ENCODE measurements at regions of chr12 and their contacts with region 1.

Region 1: DNA sequence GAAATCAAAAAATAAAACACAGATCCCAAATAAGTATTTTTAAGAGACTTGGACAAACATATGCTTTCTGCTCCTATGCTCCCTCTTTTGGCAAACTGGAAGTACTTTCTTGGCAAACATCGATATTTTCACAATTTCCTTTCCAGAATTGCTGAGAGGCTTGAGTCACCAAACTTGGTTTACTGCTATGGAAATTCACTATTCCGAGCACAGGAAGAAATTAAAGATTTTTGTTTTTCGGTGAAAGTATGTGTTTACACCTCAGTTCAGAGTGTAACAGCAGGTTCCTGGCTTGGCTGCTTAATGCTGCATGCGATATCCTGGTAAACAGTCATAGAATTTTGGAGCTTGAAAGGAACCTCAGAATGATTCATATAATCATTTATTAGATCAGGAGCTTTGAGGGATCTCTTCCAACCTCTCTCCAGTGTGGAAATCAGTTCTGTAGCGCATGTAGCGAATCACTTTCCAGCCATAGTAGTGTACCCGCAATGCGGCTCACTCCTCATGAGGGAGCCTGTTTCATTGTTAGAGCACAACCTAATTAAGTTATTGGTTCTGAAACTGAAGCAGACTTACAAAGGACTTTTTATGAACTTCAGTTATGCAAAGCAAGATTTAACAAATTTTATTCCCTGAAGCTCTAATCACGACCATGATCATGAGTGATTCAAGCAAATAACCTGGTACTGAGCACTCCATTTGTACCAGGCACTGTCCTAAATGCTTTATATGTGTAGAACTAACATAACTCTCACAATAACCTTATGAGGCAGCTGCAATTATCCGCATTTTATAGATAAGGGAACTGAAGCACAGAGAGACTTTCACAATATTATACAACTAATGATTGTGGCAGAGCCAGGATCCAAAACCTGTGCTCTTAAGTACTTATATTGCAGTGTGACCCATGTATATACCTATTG is 56.4 kb upstream of the ATP2A2 start:
- DNase-seq: no peak
- ATAC-seq: no peak
- H3K4me3 ChIP-seq: no peak overlapping the region
- H3K27ac ChIP-seq: no peak overlapping the region
- H3K4me1 ChIP-seq: no peaks in the 10 kb centered on the region
- H3K27me3 ChIP-seq: no peaks in the 10 kb centered on the region
- CTCF ChIP-seq: peak; percentile 62

Region 2: GRCh38 chr12:110100315-110100970 is 124.2 kb before region 1 on chr12:
- CTCF ChIA-PET with region 1: no interaction called
- POLR2A ChIA-PET with region 1: interaction called, 14 read pairs
- in situ Hi-C with region 1: no loop called
- intact Hi-C with region 1: loop called (anchors 5 kb)
- DNase-seq: peak; percentile 53
- ATAC-seq: peak; percentile 84
- H3K4me3 ChIP-seq: no peak overlapping the region
- H3K27ac ChIP-seq: no peak overlapping the region
- H3K4me1 ChIP-seq: peaks cover 6% of the 10 kb centered on the region
- H3K27me3 ChIP-seq: no peaks in the 10 kb centered on the region
- CTCF ChIP-seq: peak; percentile 92

Region 3: GRCh38 chr12:110205931-110206330 is 18.7 kb before region 1 on chr12:
- CTCF ChIA-PET with region 1: no interaction called
- POLR2A ChIA-PET with region 1: interaction called, 11 read pairs
- in situ Hi-C with region 1: no loop called
- intact Hi-C with region 1: no loop called
- DNase-seq: no peak
- ATAC-seq: no peak
- H3K4me3 ChIP-seq: no peak overlapping the region
- H3K27ac ChIP-seq: no peak overlapping the region
- H3K4me1 ChIP-seq: no peaks in the 10 kb centered on the region
- H3K27me3 ChIP-seq: no peaks in the 10 kb centered on the region
- CTCF ChIP-seq: no peak

Region 4: GRCh38 chr12:110252706-110253105 is 28.1 kb after region 1 on chr12:
- CTCF ChIA-PET with region 1: no interaction called
- POLR2A ChIA-PET with region 1: interaction called, 18 read pairs
- in situ Hi-C with region 1: no loop called
- intact Hi-C with region 1: no loop called
- DNase-seq: no peak
- ATAC-seq: no peak
- H3K4me3 ChIP-seq: no peak overlapping the region
- H3K27ac ChIP-seq: no peak overlapping the region
- H3K4me1 ChIP-seq: 0 out of 2 replicates have a peak, but pooled peaks cover 2% of the 10 kb centered on the region
- H3K27me3 ChIP-seq: no peaks in the 10 kb centered on the region
- CTCF ChIP-seq: no peak

Region 5: GRCh38 chr12:110750784-110751461 is 526.3 kb after region 1 on chr12:
- CTCF ChIA-PET with region 1: no interaction called
- POLR2A ChIA-PET with region 1: interaction called, 12 read pairs
- in situ Hi-C with region 1: no loop called
- intact Hi-C with region 1: no loop called
- DNase-seq: no peak
- ATAC-seq: no peak
- H3K4me3 ChIP-seq: no peak overlapping the region
- H3K27ac ChIP-seq: no peak overlapping the region
- H3K4me1 ChIP-seq: no peaks in the 10 kb centered on the region
- H3K27me3 ChIP-seq: no peaks in the 10 kb centered on the region
- CTCF ChIP-seq: no peak

Region 6: DNA sequence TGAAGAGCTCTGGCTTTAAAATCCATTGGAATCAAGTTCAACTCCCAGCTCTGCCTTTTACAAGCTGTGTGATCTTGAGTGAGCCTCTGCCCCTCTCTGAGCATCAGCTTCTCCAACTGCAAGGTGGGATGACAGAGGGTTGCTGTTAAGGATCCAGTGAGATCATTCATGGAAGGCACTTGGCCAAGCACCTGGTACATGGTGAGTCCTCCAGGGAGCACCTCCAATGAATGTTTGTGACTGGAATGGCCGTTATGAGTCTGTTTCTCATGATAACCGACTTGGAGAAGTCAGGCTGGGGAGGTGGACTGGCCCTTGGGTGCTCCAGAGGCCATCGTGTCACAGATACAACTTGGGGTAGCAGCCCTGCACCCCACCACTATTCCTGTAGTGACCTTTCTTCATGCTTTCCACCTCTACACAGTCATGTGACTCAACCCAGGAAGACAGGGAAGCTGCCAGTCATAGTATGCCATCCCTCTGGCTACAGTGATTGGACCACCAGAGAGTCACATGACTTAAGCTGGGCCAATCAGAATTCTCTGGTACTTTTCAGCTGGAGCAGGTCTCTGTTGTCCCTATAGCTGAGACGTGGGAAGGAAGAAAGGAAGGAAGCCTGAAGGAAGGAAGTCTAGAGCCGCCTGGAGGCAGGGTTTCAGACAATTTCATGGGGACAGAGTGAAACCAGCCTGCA is 842.2 kb after region 1 on chr12:
- CTCF ChIA-PET with region 1: no interaction called
- POLR2A ChIA-PET with region 1: no interaction called
- in situ Hi-C with region 1: no loop called
- intact Hi-C with region 1: no loop called
- DNase-seq: no peak
- ATAC-seq: peak; percentile 35; the same call in 1 of the 2 replicates
- H3K4me3 ChIP-seq: no peak overlapping the region
- H3K27ac ChIP-seq: no peak overlapping the region
- H3K4me1 ChIP-seq: no peaks in the 10 kb centered on the region; the same call in 1 of the 2 replicates
- H3K27me3 ChIP-seq: no peaks in the 10 kb centered on the region
- CTCF ChIP-seq: no peak